ENCODE measurements at regions of chr1 and their contacts with region 1.

Region 1: DNA sequence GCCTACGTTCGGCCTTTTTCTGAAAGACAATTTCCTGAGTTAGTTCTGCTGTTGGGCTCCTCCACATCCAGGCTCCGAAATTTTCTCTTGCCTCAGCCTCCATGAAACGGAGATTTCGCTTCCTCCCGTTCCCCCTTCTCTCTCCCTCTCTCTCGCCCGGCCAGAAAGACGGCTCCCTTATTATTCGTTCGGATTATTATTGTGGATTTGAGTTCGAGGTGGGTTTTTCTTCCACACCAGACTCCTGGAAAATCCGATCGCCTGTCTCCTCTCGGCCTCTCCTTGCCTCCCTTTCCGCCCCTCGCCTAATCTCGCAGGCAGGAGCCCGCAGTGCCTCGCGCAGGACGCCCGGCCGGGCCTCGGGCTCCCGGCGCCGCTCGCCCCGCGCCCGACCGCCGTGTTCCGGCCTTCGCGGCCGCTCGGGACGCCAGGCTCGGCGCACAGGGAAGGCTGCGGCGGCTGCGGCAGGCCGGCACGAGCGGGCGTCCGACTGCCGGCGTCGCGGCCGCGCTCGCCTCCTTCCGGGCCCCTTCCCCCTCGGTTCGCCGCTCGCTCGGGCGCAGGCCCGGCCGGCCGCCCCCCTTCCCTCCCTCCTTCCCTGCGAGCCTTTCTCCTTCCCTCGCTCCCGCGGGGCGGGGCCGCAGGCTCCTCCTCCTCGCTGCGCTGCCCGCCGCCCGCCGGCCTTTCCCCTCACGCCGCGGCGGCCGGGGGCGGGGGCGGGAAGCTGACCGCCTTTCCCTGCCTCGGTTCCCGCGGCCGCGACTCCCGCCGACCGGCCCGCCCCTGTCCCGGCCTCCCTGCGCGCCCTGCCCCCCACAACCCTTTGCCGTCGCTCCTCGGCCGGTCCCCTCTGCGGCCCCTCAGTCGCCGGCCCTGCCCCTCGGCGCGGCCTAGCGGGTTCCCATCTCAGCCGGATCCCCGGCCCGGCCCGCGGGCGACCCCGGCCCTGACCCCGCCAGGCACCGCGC is at the start of gene ARHGEF11:
- DNase-seq: peak; percentile 89
- H3K4me3 ChIP-seq: peak within 1 kb of the TSS; percentile 51 to 67
- H3K27ac ChIP-seq: peak within 1 kb of the TSS; percentile 81 to 90
- H3K4me1 ChIP-seq: peaks cover 8% of the 10 kb centered on the region
- H3K27me3 ChIP-seq: no peaks in the 10 kb centered on the region
- CTCF ChIP-seq: no peak
- POLR2A ChIP-seq: peak; percentile 81
- total RNA-seq, gene ARHGEF11: 38.3 to 92.6 TPM

Region 2: GRCh38 chr1:157138220-157139051 is 92.9 kb after region 1 on chr1 and contains the start of gene ETV3:
- intact Hi-C with region 1: loop called (anchors 2 kb)
- DNase-seq: peak; percentile 92
- H3K4me3 ChIP-seq: peak within 1 kb of the TSS; percentile 93 to 96
- H3K27ac ChIP-seq: peak within 1 kb of the TSS; percentile 96 to 97
- H3K4me1 ChIP-seq: peaks cover 6% of the 10 kb centered on the region
- H3K27me3 ChIP-seq: no peaks in the 10 kb centered on the region
- CTCF ChIP-seq: peak in 2 of 4 experiments; percentile 14 to 17
- POLR2A ChIP-seq: peak; percentile 95
- total RNA-seq, gene ETV3: 23.4 to 33.3 TPM

Measured in prostate gland (tissue), 2 donors.